ENCODE measurements at regions of chr16 and their contacts with region 1.

Region 1: DNA sequence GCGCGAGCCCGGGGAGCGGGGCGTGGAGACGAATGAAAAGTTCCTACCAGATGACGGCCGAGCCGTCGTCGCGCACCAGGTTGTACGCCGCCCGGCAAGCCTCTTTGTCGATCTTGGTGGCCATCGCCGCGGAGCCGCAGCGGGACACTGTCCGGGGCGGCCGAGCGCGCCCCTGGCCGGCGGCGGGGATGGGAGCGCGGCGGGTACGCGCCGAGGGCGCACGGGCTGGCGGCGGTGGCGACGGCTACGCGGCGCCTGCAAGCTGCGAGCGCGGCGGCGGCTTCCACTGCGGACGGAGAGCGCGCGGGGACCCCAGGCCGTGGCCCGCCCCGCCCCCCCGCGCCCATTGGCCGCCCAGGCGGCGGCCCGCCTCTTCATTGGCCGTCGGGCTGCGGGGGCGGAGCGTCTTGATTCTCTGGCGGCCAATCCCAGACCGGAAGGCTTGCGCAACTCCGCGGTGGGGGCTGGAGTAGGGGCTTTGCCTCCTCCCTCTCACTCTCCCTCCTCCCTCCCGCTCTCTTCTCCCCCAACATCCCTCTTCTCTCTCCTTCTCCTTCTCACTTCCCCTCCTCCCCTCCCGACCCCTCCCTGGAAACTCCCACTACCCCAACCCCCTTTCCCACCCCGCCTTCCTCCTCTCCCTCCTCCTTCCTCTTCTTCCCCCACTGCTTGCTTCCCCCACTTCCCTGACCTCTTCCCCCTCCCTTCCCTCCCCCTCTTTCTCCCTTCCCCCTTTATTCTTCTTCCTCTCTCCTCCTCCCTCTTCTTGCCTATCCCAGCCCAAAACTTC is at the start of gene COTL1:
- DNase-seq: peak; percentile 99
- ATAC-seq: peak; percentile 82
- H3K4me3 Mint-ChIP-seq: peak within 1 kb of the TSS; percentile 97
- H3K27ac Mint-ChIP-seq: peak within 1 kb of the TSS; percentile 86
- H3K4me1 Mint-ChIP-seq: peaks cover 36% of the 10 kb centered on the region
- H3K27me3 Mint-ChIP-seq: no peaks in the 10 kb centered on the region
- CTCF ChIP-seq: no peak
- total RNA-seq, gene COTL1: 664 to 677 TPM

Region 2: GRCh38 chr16:84504420-84505248 is 113.4 kb before region 1 on chr16 and contains the start of gene MEAK7:
- CTCF ChIA-PET with region 1: interaction called, 145 read pairs
- POLR2A ChIA-PET with region 1: interaction called, 19 read pairs
- intact Hi-C with region 1: no loop called
- DNase-seq: peak; percentile 99
- ATAC-seq: peak; percentile 96
- H3K4me3 Mint-ChIP-seq: peak within 1 kb of the TSS; percentile 91
- H3K27ac Mint-ChIP-seq: peak within 1 kb of the TSS; percentile 88
- H3K4me1 Mint-ChIP-seq: peaks cover 48% of the 10 kb centered on the region
- H3K27me3 Mint-ChIP-seq: no peaks in the 10 kb centered on the region
- CTCF ChIP-seq: no peak
- total RNA-seq, gene MEAK7: 21.1 to 22.4 TPM

Region 3: DNA sequence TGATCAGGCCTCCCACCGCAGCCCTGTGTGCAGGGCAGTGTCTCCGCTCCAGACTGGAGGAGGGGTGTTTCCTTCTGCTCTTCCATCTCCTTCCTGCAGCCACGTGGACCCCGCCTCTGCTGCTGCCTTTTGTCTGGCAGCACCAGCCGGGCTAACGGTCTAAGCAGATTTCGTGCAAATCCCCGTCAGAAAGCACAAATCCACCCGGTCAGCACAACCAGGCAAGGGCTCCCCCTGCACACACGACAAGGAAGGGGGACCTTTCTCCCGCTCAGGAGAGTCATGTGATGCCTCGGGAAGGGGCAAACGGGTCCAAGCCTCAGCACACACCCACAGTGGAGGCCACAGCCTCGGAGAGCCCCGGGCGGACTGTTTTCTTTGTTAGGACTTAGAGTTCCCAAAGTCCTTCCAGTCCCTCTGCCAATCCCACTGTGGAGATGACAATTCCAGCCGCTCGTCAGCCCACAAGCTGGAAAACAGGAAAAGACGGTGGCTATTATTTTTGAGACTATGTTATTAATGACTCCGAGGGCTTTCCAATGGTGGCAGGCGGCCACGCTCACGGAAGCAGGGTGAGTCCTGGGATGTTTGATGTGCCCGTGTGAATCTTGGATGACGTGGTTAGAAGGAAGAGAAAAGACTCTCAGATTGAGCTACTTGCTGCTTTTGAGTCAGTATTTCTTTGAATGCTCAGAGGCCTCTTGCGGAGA is 91.0 kb before region 1 on chr16:
- CTCF ChIA-PET with region 1: interaction called, 10 read pairs
- POLR2A ChIA-PET with region 1: no interaction called
- intact Hi-C with region 1: no loop called
- DNase-seq: no peak
- ATAC-seq: no peak
- H3K4me3 Mint-ChIP-seq: no peak overlapping the region
- H3K27ac Mint-ChIP-seq: no peak overlapping the region
- H3K4me1 Mint-ChIP-seq: peaks cover 11% of the 10 kb centered on the region
- H3K27me3 Mint-ChIP-seq: no peaks in the 10 kb centered on the region
- CTCF ChIP-seq: no peak

Region 4: GRCh38 chr16:84599521-84600202 is 18.3 kb before region 1 on chr16:
- CTCF ChIA-PET with region 1: interaction called, 10 read pairs
- POLR2A ChIA-PET with region 1: interaction called, 94 read pairs
- intact Hi-C with region 1: loop called (anchors 2 kb)
- DNase-seq: peak; percentile 93
- ATAC-seq: peak; percentile 61
- H3K4me3 Mint-ChIP-seq: peak overlapping the region; percentile 83
- H3K27ac Mint-ChIP-seq: peak overlapping the region; percentile 100
- H3K4me1 Mint-ChIP-seq: peaks cover 92% of the 10 kb centered on the region
- H3K27me3 Mint-ChIP-seq: no peaks in the 10 kb centered on the region
- CTCF ChIP-seq: no peak

Region 5: DNA sequence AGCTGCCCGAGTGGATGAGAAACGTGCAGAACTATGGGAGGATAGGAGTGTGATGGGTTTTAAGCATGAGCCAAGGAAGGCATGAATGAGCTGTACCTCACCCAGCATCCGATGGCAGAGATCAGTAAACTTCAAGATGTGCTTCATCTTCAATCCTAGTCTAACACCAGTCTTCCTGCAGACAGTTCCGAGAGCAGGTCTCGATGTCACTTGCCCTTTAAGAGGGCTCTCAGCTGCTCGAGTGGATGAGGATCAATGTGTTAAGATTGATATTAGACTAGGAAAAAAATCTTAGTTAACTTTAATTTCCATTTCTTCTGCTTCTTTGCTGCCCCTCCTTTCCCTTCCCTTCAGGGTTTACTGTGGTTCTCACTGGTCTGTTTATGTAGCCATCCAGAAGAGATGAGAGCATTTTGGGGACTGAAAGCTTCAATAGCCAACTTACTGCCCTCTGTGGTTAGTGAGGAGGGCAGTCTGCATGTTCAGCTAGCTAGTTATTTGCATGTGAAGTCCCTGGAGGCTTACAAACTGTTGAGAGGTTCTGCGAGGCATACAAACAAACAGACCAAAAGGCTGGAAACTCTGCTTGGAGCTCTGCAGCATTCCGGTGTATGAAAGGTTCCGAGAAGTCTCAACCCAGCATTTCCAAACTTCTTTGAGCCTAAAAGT is 45.6 kb after region 1 on chr16:
- CTCF ChIA-PET with region 1: interaction called, 10 read pairs
- POLR2A ChIA-PET with region 1: no interaction called
- intact Hi-C with region 1: no loop called
- DNase-seq: no peak
- ATAC-seq: no peak
- H3K4me3 Mint-ChIP-seq: no peak overlapping the region
- H3K27ac Mint-ChIP-seq: no peak overlapping the region
- H3K4me1 Mint-ChIP-seq: peaks cover 8% of the 10 kb centered on the region
- H3K27me3 Mint-ChIP-seq: no peaks in the 10 kb centered on the region
- CTCF ChIP-seq: no peak

Region 6: GRCh38 chr16:84689111-84689510 is 71.1 kb after region 1 on chr16:
- CTCF ChIA-PET with region 1: no interaction called
- POLR2A ChIA-PET with region 1: no interaction called
- intact Hi-C with region 1: no loop called
- DNase-seq: no peak
- ATAC-seq: no peak
- H3K4me3 Mint-ChIP-seq: no peak overlapping the region
- H3K27ac Mint-ChIP-seq: no peak overlapping the region
- H3K4me1 Mint-ChIP-seq: peaks cover 10% of the 10 kb centered on the region
- H3K27me3 Mint-ChIP-seq: peaks cover 10% of the 10 kb centered on the region
- CTCF ChIP-seq: no peak

Region 7: DNA sequence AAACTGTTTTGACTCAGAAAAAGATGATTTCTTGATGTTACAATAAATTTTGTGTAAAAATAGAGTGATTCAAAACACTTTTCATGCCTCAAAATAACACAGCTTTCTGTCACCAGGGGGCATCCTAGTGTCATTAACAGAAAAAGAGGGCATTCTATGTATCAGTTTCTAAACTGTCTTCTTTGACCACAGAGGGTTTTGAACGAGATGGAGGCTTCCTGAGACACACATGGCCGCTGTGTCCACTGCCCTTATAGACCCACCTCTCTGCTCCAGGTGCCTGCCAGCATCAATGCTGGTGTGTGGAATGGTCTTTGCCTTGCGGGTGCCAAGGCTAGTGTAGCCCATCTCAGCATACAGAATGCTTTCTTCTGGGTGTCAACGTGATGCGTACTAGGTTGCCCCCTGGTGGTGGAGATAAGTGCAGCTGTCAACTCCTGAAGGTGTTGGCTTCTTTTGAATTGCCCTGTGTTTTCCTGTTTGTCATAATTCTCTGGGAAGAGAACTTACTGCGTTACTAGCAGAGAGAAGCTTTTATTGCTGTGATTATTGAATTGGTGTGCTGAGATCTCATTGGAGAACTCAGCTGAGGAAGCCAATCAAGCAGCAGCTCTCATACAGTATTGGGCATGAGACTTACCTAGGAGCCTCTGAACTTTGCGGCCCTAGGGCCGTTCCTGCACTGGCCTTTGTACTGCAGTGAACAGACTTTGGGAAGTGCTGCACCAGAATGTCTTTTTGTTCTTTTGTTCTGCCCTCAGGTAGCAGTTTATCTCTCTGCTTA is 120.5 kb after region 1 on chr16:
- CTCF ChIA-PET with region 1: interaction called, 52 read pairs
- POLR2A ChIA-PET with region 1: no interaction called
- intact Hi-C with region 1: no loop called
- DNase-seq: peak; percentile 89
- ATAC-seq: peak; percentile 85
- H3K4me3 Mint-ChIP-seq: no peak overlapping the region
- H3K27ac Mint-ChIP-seq: peak overlapping the region; percentile 13
- H3K4me1 Mint-ChIP-seq: peaks cover 60% of the 10 kb centered on the region
- H3K27me3 Mint-ChIP-seq: no peaks in the 10 kb centered on the region
- CTCF ChIP-seq: peak; percentile 94